HEK293 (cell line): ENCODE measurements at regions of chr1 and their contacts with region 1.

Region 1: DNA sequence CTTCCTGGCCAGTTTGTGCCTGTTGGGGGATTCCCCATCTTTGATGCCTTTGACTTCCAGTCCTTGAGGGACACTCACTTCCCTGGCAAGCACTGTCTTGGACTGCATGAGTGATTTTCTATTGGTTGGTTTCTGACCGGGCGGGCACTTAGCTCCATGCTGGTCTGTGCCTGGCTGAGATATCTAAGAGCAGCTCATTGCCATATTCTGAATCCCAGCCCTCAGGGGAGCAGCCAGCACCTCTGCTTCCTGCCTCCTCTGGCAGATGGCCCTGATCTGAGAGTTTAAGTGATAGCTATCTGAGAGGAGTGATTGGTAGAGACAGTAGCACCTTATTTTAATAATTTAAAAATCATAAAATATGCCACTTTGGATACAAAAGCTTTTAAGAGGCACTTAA is 52.5 kb downstream of the DISC1 start:
- H3K4me3 ChIP-seq: no peak overlapping the region
- H3K27ac ChIP-seq: no peak overlapping the region
- H3K4me1 ChIP-seq: no peaks in the 10 kb centered on the region
- CTCF ChIP-seq: no peak

Region 2: DNA sequence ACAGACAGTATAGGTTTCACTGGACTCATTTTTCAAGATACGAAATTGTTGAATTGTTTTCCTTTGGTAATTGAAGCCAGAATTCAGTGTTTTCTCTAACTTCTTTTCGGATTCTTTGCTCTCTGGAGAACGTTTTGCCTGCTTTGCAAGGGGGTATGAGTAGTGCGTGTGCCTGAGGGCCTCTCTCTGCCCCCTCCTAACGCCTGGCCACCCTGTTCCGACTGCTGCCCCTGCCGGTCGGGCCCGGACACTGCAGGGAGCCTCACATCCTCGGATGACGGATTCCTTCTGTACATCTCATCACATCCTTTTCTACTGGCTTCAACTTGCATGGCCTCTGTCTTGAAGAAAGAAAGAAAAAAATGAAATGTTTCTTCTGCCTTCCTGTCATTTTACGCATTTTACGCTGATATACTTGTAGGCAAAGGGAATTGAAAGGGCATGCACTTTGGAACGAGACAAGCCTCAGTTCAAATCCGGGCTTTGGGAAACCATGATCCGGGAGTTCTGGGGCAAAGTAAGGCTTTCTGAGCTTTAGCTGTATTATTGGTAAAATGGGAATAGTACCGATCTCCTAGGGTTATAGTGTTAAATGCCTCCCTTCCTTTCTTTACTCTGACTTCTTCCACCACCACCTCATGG is 12.6 kb after region 1 on chr1:
- CTCF ChIA-PET with region 1: interaction called, 11 read pairs
- POLR2A ChIA-PET with region 1: no interaction called
- H3K4me3 ChIP-seq: no peak overlapping the region
- H3K27ac ChIP-seq: no peak overlapping the region
- H3K4me1 ChIP-seq: peaks cover 4% of the 10 kb centered on the region
- CTCF ChIP-seq: peak; percentile 85

Region 3: GRCh38 chr1:231705806-231706760 is 27.0 kb after region 1 on chr1:
- CTCF ChIA-PET with region 1: no interaction called
- POLR2A ChIA-PET with region 1: no interaction called
- H3K4me3 ChIP-seq: no peak overlapping the region
- H3K27ac ChIP-seq: no peak overlapping the region
- H3K4me1 ChIP-seq: peaks cover 10% of the 10 kb centered on the region; the same call in 1 of the 2 replicates
- CTCF ChIP-seq: no peak